ENCODE measurements at regions of chr10 and their contacts with region 1.

Region 1: GRCh38 chr10:34528320-34528719 is 286.8 kb downstream of the PARD3 start:
- DNase-seq: peak; percentile 60
- H3K4me3 Mint-ChIP-seq: peak overlapping the region; percentile 34
- H3K27ac Mint-ChIP-seq: peak overlapping the region; percentile 66
- H3K4me1 Mint-ChIP-seq: peaks cover 40% of the 10 kb centered on the region
- H3K27me3 Mint-ChIP-seq: no peaks in the 10 kb centered on the region
- CTCF ChIP-seq: no peak

Region 2: DNA sequence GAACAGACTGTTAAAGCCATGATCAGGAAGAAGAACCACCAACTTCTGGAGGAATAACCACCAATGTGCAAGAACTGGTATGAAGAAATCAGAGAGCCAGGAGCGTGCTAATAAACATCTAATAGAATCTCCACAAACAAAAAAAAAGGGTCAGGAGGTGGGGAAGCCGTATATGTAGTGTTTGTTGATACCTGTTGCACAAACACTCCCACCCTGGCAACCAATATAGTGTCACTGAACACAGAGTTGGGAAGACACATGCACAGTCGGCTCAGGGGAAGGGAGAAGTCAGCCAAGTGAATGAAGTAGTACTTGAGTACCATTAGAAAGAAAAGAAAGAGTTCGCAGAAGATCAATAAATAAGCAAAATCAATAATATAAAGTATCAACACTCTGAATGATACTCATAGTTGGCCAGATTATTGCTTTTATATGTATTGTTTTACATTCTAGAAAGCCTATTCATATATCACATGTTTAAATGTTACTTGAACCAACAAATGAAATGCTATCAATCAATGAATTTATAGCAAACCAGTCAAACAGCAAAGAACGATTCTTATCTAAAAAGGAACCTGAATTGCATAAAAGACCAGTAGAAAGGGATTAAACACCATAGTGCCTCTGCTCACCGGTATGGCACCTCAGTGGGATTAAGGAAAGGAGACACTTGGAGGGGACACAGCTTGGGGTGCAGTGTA is 113.1 kb before region 1 on chr10:
- CTCF ChIA-PET with region 1: no interaction called
- intact Hi-C with region 1: loop called (anchors 5 kb)
- DNase-seq: no peak
- H3K4me3 Mint-ChIP-seq: no peak overlapping the region
- H3K27ac Mint-ChIP-seq: no peak overlapping the region
- H3K4me1 Mint-ChIP-seq: peaks cover 68% of the 10 kb centered on the region
- H3K27me3 Mint-ChIP-seq: no peaks in the 10 kb centered on the region
- CTCF ChIP-seq: no peak